CD4-positive, alpha-beta T cell (primary cell): ENCODE measurements at regions of chr1 and their contacts with region 1.

Region 1: GRCh38 chr1:231893400-231894102 is 267.0 kb downstream of the DISC1 start:
- DNase-seq: no peak
- ATAC-seq: no peak
- H3K4me3 ChIP-seq: no peak overlapping the region
- H3K4me3 Mint-ChIP-seq: no peak overlapping the region
- H3K27ac ChIP-seq: no peak overlapping the region
- H3K27ac Mint-ChIP-seq: no peak overlapping the region
- H3K4me1 ChIP-seq: no peaks in the 10 kb centered on the region
- H3K4me1 Mint-ChIP-seq: peaks cover 23% of the 10 kb centered on the region
- H3K27me3 ChIP-seq: no peaks in the 10 kb centered on the region
- H3K27me3 Mint-ChIP-seq: no peaks in the 10 kb centered on the region
- CTCF ChIP-seq: no peak

Region 2: DNA sequence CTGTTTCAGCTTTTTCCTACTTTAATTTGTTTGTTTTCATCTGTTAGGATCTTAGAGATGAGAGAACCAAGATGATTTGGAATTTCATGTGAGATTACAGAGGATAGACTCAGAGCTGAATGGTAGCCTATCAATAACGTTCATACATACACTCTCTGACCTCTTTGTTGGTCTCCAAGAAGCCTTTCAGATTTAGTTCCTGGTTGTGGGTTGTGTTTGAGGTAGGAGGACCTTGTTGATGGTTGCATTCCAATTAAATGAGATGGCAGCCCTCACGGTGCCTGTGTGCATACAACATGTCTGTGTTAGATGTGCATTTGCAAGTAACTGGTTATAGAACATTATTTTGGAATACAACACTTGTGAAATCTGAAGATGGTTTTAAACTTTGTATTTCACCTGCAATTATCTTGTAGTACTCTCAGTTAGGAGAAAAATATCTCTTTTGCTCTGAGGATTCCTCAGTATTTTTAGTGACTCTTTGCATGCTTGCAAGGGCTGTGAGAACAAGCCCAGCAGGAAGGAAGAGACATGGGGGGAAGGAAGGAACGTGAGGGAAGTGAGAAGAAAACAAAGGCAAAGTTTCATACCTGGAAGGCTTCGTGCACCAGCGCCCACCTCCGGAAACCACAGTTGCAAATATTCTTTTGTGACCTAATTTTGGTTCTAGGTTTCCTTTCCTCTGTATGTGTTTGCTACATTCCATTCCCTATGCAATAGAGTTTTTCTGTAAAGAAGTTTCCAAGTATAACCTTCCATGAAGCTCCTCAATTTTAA is 24.9 kb after region 1 on chr1:
- CTCF ChIA-PET with region 1: no interaction called
- POLR2A ChIA-PET with region 1: no interaction called
- intact Hi-C with region 1: loop called in 1 of 2 experiments (anchors 2 kb)
- DNase-seq: peak in 12 of 14 experiments; percentile 5 to 77 (median 17)
- ATAC-seq: peak; percentile 61
- H3K4me3 ChIP-seq: peak overlapping the region; percentile 34
- H3K4me3 Mint-ChIP-seq: peak overlapping the region; percentile 71
- H3K27ac ChIP-seq: peak overlapping the region; percentile 61 to 74
- H3K27ac Mint-ChIP-seq: peak overlapping the region; percentile 85
- H3K4me1 ChIP-seq: peaks cover 71% of the 10 kb centered on the region
- H3K4me1 Mint-ChIP-seq: peaks cover 83% of the 10 kb centered on the region
- H3K27me3 ChIP-seq: no peaks in the 10 kb centered on the region
- H3K27me3 Mint-ChIP-seq: no peaks in the 10 kb centered on the region
- CTCF ChIP-seq: no peak